ENCODE measurements at regions of chr3 and their contacts with region 1.

Region 1: GRCh38 chr3:49028673-49029562 is at the start of gene IMPDH2:
- H3K4me3 Mint-ChIP-seq: peak within 1 kb of the TSS; percentile 81
- H3K27ac Mint-ChIP-seq: peak within 1 kb of the TSS; percentile 89
- H3K4me1 Mint-ChIP-seq: peaks cover 53% of the 10 kb centered on the region
- H3K27me3 Mint-ChIP-seq: no peaks in the 10 kb centered on the region

Region 2: DNA sequence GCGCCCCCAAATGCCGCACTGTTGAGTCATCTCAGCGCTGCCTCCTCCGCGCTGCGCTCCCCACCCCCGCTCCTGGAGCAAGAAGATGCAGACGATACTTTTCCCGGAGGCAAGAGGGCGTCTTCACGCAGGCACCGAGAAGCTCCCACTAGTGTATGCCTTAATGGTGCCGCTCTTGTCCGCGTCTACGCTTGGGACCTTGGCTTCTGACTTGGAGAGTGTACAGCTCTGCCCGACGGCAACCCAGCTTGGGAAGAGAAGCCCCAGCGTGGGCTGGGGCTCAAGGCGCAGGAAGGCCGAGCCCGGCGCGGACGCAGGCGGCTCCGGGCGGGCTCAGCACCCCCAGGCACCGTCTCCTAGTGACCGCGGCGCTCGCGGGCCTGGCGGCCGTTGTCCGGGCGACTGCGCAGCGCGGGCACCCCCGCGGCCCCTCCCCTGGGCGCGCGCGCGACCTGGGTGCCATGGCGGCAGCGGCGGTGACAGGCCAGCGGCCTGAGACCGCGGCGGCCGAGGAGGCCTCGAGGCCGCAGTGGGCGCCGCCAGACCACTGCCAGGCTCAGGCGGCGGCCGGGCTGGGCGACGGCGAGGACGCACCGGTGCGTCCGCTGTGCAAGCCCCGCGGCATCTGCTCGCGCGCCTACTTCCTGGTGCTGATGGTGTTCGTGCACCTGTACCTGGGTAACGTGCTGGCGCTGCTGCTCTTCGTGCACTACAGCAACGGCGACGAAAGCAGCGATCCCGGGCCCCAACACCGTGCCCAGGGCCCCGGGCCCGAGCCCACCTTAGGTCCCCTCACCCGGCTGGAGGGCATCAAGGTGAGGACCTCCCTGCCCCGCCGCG is 38.9 kb before region 1 on chr3 and contains the start of gene P4HTM:
- intact Hi-C with region 1: loop called (anchors 5 kb)
- H3K4me3 Mint-ChIP-seq: peak within 1 kb of the TSS; percentile 85
- H3K27ac Mint-ChIP-seq: peak within 1 kb of the TSS; percentile 81
- H3K4me1 Mint-ChIP-seq: peaks cover 41% of the 10 kb centered on the region
- H3K27me3 Mint-ChIP-seq: no peaks in the 10 kb centered on the region

Region 3: GRCh38 chr3:49313896-49314688 is 285.2 kb after region 1 on chr3:
- intact Hi-C with region 1: no loop called
- H3K4me3 Mint-ChIP-seq: no peak overlapping the region
- H3K27ac Mint-ChIP-seq: no peak overlapping the region
- H3K4me1 Mint-ChIP-seq: peaks cover 6% of the 10 kb centered on the region
- H3K27me3 Mint-ChIP-seq: no peaks in the 10 kb centered on the region